Thyroid gland (tissue), 4 donors: ENCODE measurements at regions of chr1 and their contacts with region 1.

Region 1: DNA sequence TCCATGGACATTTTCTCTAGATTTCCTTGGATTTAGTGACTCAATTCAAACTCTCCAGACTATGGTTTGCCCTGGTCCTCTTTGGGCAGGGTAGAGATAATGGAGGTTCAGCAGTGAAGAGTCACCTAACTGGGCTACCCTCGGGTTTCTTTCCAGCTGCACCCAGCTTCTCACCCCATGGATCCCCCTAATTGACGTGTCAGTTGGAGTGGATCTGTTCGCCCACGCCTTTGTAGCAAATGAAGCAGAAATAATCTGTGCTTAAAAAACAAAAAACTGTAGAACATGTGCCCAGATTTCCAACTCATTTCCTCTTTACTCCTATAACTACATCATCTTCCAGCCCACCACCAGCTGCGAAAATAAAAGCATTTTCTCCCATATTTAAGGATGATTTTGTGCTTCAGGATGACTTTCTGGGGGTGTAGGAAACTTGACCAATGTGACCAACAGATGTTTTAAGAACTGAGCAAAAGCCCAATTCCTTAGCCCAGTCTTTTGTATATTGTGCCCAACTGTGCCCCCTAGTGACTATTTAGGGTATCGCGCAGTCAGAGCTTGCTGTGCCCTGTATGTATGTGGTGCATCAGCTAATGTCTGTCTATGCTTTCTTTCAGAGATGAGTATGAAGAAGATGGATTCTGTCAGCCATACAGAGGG is 66.5 kb upstream of the UBE2U start:
- DNase-seq: peak; percentile 72 to 80
- H3K4me3 ChIP-seq: no peak overlapping the region
- H3K27ac ChIP-seq: no peak overlapping the region
- H3K4me1 ChIP-seq: no peaks in the 10 kb centered on the region
- H3K27me3 ChIP-seq: no peaks in the 10 kb centered on the region
- CTCF ChIP-seq: peak; percentile 69 to 91 (median 80)
- POLR2A ChIP-seq: no peak

Region 2: GRCh38 chr1:63615768-63616420 is 521.0 kb before region 1 on chr1:
- intact Hi-C with region 1: loop called (anchors 10 kb)
- DNase-seq: peak; percentile 51 to 54
- H3K4me3 ChIP-seq: no peak overlapping the region
- H3K27ac ChIP-seq: no peak overlapping the region
- H3K4me1 ChIP-seq: peaks cover 0 to 4% of the 10 kb centered on the region in 2 donors
- H3K27me3 ChIP-seq: no peaks in the 10 kb centered on the region
- CTCF ChIP-seq: peak; percentile 52 to 83 (median 76)
- POLR2A ChIP-seq: no peak

Region 3: GRCh38 chr1:63691701-63692425 is 445.0 kb before region 1 on chr1:
- intact Hi-C with region 1: loop called (anchors 10 kb)
- DNase-seq: peak; percentile 30 to 35
- H3K4me3 ChIP-seq: no peak overlapping the region
- H3K27ac ChIP-seq: no peak overlapping the region
- H3K4me1 ChIP-seq: no peaks in the 10 kb centered on the region
- H3K27me3 ChIP-seq: no peaks in the 10 kb centered on the region
- CTCF ChIP-seq: peak; percentile 30 to 86 (median 72)
- POLR2A ChIP-seq: no peak

Region 4: GRCh38 chr1:63773815-63774616 is 362.9 kb before region 1 on chr1 and contains the start of gene ROR1:
- intact Hi-C with region 1: loop called (anchors 10 kb)
- DNase-seq: peak; percentile 80 to 82
- H3K4me3 ChIP-seq: peak within 1 kb of the TSS in 2 of 3 donors; percentile 28 to 38
- H3K27ac ChIP-seq: peak within 1 kb of the TSS in 1 of 3 donors; percentile 51
- H3K4me1 ChIP-seq: peaks cover 4% of the 10 kb centered on the region in 2 donors
- H3K27me3 ChIP-seq: no peaks in the 10 kb centered on the region
- CTCF ChIP-seq: peak in 5 of 6 experiments; percentile 31 to 71 (median 58)
- POLR2A ChIP-seq: no peak
- total RNA-seq, gene ROR1: 0.73 to 2.6 (median 1.4) TPM

Region 5: GRCh38 chr1:64000021-64000420 is 136.9 kb before region 1 on chr1:
- intact Hi-C with region 1: no loop called
- DNase-seq: no peak
- H3K4me3 ChIP-seq: no peak overlapping the region
- H3K27ac ChIP-seq: no peak overlapping the region
- H3K4me1 ChIP-seq: no peaks in the 10 kb centered on the region
- H3K27me3 ChIP-seq: no peaks in the 10 kb centered on the region
- CTCF ChIP-seq: no peak
- POLR2A ChIP-seq: no peak

Region 6: GRCh38 chr1:64072089-64072793 is 64.6 kb before region 1 on chr1:
- intact Hi-C with region 1: no loop called
- DNase-seq: no peak
- H3K4me3 ChIP-seq: no peak overlapping the region
- H3K27ac ChIP-seq: no peak overlapping the region
- H3K4me1 ChIP-seq: no peaks in the 10 kb centered on the region
- H3K27me3 ChIP-seq: no peaks in the 10 kb centered on the region
- CTCF ChIP-seq: no peak
- POLR2A ChIP-seq: no peak

Region 7: GRCh38 chr1:64223329-64224151 is 86.7 kb after region 1 on chr1:
- intact Hi-C with region 1: no loop called
- DNase-seq: no peak
- H3K4me3 ChIP-seq: no peak overlapping the region
- H3K27ac ChIP-seq: no peak overlapping the region
- H3K4me1 ChIP-seq: no peaks in the 10 kb centered on the region
- H3K27me3 ChIP-seq: no peaks in the 10 kb centered on the region
- CTCF ChIP-seq: no peak
- POLR2A ChIP-seq: no peak

Region 8: DNA sequence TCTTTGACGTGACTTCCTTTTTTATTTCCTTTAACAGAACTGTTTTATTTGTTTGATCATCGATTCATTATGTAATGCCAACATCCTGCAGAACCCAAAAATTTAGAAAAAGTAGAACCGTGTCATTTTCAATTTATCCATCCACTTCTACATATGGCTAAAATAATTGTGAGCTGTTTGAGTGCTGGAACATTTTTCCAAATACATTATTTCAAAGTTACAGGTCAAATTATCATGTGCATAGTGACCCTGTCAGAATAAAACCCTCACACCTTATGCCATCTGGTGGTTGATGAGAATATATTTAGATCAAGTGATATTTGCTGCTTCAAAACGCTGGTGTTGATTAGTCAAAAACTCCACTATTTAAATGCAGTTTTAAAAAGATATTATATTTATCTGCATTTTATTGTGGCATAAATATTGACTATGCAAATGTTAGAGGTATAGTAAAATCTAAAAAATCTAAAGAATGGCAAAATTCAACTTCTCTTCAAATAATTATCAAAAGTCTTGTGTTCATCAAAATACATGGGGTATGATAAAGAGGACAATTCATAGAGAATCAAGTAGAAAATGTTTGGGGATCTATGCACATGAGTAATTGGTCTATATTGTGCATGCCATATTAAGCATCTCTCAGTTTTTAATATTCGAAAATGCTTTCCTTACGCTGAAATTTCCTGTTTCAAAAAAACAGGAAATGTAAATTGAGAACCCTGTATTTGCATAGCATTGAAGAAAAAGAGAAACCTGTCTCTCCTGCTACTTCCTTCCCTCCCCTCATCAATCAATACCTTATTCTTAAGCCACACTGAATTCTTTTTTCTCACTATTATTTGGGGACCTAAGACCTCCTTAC is 106.2 kb after region 1 on chr1:
- intact Hi-C with region 1: loop called (anchors 5 kb)
- DNase-seq: no peak
- H3K4me3 ChIP-seq: no peak overlapping the region
- H3K27ac ChIP-seq: no peak overlapping the region
- H3K4me1 ChIP-seq: peaks cover 0 to 4% of the 10 kb centered on the region in 2 donors
- H3K27me3 ChIP-seq: no peaks in the 10 kb centered on the region
- CTCF ChIP-seq: peak in 5 of 6 experiments; percentile 10 to 56 (median 47)
- POLR2A ChIP-seq: no peak

Region 9: DNA sequence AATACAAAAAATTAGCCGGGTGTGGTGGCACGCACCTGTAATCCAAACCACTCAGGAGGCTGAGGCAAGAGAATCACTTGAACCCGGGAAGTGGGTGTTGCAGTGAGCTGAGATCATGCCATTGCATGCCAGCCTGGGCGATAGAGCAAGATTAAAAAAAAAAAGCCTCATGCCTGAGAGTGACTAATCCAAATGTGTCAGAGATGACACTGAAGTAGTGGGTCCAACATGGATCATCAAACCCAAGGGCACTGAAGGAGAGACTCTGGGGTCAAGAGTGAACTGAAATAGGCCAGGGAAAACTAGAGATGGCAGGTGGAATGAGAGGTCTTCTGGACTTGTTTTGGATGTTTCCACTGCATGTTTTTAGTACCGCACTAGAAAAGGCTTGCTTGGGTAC is 322.9 kb after region 1 on chr1:
- intact Hi-C with region 1: no loop called
- DNase-seq: no peak
- H3K4me3 ChIP-seq: no peak overlapping the region
- H3K27ac ChIP-seq: no peak overlapping the region
- H3K4me1 ChIP-seq: no peaks in the 10 kb centered on the region
- H3K27me3 ChIP-seq: no peaks in the 10 kb centered on the region
- CTCF ChIP-seq: no peak
- POLR2A ChIP-seq: no peak